Tibial artery (tissue), 4 donors: ENCODE measurements at regions of chr1 and their contacts with region 1.

Region 1: DNA sequence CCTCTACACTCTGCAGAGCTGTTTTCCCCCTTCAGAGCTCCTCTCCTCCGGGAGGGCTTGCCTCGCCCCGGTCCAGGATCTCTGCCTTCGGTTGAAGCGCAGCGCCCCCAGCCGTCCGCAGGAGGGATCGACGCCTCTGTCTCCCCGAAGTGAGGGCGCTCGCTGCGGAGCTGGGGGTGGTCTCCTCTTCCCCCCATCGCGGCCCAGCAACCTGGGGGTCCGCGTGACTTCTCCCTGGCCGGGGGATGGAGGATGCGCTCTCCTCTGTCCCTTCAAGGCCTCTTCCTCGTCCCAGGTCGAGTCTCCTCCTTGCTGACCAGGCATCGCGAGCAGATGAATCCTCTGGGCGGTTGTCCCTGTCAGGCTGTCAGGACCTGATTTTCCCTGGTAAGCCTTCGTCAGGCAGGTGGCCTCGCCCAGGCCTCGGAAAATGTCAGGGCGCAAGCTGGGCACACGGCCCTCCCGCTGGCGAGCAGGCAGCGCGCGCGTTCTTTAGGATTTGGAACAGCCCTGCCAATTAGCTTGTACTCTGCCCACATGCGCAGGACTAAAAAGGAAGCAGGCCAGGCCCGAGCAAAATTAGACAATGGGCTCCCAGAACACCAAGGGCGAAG is 90.5 kb downstream of the EDEM3 start:
- DNase-seq: peak; percentile 69 to 82
- H3K4me3 ChIP-seq: peak overlapping the region; percentile 22 to 45
- H3K27ac ChIP-seq: no peak overlapping the region
- H3K4me1 ChIP-seq: peaks cover 0 to 12% (median 7%) of the 10 kb centered on the region in 4 donors
- H3K27me3 ChIP-seq: peaks cover 0 to 6% of the 10 kb centered on the region in 2 donors
- CTCF ChIP-seq: peak; percentile 90 to 94

Region 2: DNA sequence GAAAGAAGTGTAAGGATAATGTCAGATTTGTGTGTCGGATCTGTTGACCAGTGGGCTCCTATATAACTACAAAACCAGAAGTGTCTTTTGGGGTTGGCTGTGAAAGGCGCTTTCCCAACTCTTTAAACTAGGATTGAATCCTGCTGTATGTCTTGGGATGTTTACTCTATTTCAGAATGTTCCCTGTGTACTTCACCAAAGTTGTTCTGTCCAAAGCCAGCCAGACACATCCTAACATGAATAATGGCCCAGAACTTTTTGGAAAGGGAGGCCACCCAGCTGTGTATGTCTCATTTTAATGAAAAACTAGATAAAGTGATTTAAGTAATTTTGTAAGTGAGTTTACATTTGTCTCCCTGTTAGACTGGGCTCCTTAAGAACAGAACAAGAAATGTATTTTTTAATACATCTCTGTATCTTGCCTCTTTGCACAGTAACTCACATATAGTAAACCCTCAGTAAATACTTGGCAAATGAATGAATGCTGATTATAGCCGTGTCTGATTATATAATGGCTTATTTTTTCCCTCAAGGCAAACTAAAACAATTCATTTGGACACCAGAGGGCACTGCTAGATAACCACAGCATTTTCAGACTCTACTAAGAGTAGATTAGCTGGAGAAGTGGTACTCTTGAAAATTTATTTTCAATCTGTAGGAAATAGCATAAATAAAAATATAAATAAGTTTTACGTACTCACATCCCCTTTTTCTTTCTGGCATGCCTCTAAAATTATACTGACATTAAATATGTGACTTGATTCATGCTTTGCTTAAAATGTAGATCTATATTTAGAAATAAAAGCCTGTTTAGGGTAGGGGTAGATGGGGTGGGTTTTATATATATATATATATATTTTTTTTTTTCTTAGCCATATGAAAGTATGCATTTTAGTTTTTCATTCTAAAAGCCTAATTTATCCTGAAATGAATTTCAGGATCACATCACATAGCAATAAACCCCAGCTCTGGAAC is 588.8 kb before region 1 on chr1:
- intact Hi-C with region 1: loop called (anchors 5 kb)
- DNase-seq: no peak
- H3K4me3 ChIP-seq: no peak overlapping the region
- H3K27ac ChIP-seq: peak overlapping the region in 1 of 2 donors; percentile 47
- H3K4me1 ChIP-seq: peaks cover 0 to 20% (median 2%) of the 10 kb centered on the region in 4 donors
- H3K27me3 ChIP-seq: no peaks in the 10 kb centered on the region
- CTCF ChIP-seq: peak; percentile 72 to 82

Region 3: DNA sequence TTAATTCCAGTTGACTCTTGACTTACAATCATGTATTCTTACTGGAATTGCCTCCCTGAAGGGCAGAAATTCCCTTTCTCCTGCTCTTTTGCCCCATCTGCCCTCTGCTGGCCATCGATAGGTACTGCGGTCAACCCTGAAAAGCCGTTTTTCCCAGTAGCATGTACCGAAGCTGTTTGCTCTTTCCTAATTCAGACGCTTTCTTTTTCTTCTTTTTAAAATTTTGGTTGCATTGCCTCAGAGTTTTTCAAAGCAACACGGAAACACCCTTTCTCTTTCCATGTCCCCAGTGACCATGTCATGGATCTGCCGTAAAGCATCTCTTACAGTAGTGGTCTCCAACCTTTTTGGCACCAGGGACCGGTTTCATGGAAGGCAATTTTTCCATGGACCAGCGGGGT is 441.5 kb before region 1 on chr1:
- intact Hi-C with region 1: loop called (anchors 10 kb)
- DNase-seq: peak; percentile 45 to 70
- H3K4me3 ChIP-seq: no peak overlapping the region
- H3K27ac ChIP-seq: no peak overlapping the region
- H3K4me1 ChIP-seq: peaks cover 0 to 8% (median 0%) of the 10 kb centered on the region in 4 donors
- H3K27me3 ChIP-seq: no peaks in the 10 kb centered on the region
- CTCF ChIP-seq: peak; percentile 84 to 92

Region 4: GRCh38 chr1:184386312-184387068 is 277.7 kb before region 1 on chr1 and contains the start of gene C1orf21:
- intact Hi-C with region 1: loop called (anchors 10 kb)
- DNase-seq: peak; percentile 87 to 91
- H3K4me3 ChIP-seq: peak within 1 kb of the TSS; percentile 91 to 98
- H3K27ac ChIP-seq: peak within 1 kb of the TSS; percentile 81 to 87
- H3K4me1 ChIP-seq: peaks cover 0 to 13% (median 8%) of the 10 kb centered on the region in 4 donors
- H3K27me3 ChIP-seq: no peaks in the 10 kb centered on the region
- CTCF ChIP-seq: no peak

Region 5: DNA sequence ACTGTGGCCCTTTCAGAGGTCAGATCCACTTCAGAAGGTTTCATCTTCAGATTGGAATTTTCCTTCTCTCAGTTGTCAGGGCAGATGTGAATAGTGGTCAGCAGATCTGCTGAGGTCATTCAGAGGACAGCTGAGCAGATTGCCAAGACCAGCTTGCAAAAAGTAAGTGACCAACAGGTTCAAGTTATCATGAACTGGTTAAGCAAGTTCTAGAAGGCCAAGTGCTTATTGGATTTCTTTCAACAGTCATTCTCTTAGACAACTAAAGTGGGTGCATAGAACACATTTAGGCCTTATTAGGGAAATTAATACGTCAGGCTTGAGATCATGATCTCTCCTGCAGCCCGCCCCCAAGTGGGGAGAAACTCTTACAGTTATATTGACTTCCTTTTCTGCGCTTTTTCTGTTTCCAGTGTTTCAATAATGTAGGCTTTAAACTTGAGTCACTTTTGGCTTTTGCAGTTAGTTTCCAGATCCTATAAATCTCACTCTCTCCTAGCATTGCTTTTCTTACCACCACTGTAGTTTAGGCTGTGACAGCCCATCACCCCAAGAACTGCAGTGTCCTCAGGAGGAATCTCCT is 181.0 kb before region 1 on chr1:
- intact Hi-C with region 1: loop called (anchors 10 kb)
- DNase-seq: no peak
- H3K4me3 ChIP-seq: no peak overlapping the region
- H3K27ac ChIP-seq: peak overlapping the region; percentile 25 to 56
- H3K4me1 ChIP-seq: peaks cover 0 to 57% (median 27%) of the 10 kb centered on the region in 4 donors
- H3K27me3 ChIP-seq: no peaks in the 10 kb centered on the region
- CTCF ChIP-seq: no peak

Region 6: DNA sequence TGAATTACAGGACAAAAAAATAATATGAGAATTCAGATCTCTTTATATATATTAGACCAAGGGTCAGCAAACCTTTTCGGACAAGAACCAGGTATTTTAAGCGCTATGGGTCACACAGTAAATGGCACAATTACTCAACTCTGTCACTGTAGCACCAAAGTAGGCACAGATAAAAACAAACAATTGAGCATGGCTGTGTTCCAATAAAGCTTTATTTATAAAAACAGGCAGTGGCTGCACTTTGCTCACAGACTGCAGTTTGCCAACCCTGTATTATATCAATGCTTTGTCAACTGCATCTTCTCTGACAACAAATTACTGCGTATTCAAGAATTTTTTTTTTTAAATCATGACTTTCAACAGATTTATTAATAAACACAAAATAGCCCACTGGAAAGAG is 60.7 kb after region 1 on chr1:
- intact Hi-C with region 1: no loop called
- DNase-seq: no peak
- H3K4me3 ChIP-seq: no peak overlapping the region
- H3K27ac ChIP-seq: no peak overlapping the region
- H3K4me1 ChIP-seq: no peaks in the 10 kb centered on the region
- H3K27me3 ChIP-seq: no peaks in the 10 kb centered on the region
- CTCF ChIP-seq: no peak